Activated B cell treated with CpG ODN at 0.5 μM for 24 hours (primary cell): ENCODE measurements at regions of chr3 and their contacts with region 1.

Region 1: DNA sequence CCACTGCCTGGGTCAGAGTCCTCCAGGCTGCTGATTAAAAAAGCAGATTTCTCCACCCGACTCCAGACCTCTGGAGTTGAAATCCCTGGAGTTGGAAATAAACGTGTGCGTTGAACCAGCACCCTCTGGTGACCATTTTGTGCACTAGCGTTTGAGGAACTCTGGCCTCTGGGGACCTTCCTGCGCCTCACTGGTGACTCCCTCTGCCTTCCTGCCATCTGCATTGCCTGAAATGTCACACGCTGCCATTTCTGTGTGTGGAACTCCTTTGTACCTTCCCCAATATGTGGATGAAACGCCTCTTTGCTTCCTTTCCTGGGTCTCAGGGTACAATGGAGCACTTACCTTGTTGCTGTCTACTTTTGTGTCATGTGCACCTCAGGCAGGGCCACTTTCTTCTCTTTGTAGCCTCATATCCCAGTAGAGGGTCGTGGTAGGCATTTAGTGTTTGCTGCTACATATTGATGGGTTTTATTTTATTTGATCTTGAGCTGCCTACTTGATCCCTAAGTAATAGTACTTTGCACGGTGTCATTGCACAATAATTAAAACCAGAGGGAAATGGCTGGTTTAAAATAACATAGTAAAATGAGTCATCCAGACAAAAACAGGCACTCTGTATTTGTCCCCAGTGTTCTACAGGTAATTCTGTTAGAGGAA is 56.8 kb downstream of the GPR171 start:
- DNase-seq: peak; percentile 36
- ATAC-seq: peak; percentile 99
- H3K4me3 Mint-ChIP-seq: no peak overlapping the region
- H3K27ac Mint-ChIP-seq: no peak overlapping the region
- H3K4me1 Mint-ChIP-seq: peaks cover 4% of the 10 kb centered on the region
- H3K27me3 Mint-ChIP-seq: peaks cover 4% of the 10 kb centered on the region
- CTCF ChIP-seq: peak; percentile 87

Region 2: DNA sequence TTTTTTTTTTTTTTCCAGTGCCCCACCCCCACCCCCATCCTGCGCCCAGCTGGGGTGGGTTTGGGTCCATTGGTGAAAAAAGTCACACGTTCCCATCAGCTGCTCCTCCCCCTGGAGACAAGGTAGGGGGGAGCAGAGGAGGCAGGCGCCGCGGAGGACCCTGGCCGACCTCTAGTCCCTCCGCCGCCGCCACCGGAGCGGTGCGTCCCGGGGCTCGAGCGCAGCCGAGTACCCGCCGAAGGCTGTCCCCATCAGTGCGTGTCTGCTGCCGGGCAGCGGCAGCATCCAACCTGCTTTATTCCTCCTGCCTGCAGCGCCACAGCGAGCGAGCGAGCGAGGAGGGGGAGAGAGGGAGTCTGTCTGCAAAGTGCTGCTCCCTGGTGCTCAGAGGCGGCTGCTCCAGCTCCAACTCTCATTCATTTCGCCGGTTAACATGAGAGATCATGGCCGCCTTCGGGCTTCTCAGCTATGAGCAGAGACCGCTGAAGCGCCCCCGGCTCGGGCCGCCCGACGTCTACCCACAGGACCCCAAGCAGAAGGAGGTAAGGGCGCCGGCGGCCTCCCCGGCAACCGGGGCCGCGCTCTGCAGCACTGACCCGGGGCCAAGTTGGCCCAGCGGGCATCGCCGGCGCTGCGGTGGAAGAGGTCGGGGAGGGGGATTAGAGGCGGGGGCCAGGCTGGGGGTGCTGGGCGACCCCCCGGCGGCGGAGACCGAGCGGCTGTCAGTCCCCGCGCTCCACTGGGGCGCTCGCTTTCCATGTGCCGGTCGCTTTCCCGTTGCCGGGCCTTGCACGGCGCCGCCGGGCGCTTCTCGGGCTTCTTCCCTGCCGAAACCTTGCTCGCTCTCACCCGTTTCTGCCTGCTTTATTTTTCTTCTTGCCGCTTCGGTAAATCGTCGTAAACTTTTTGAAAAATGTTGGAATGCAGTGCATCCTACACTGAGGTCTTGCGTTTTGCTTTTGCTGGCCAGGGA is 59.4 kb before region 1 on chr3:
- CTCF ChIA-PET with region 1: interaction called, 3 read pairs
- POLR2A ChIA-PET with region 1: interaction called, 4 read pairs
- intact Hi-C with region 1: loop called (anchors 2 kb)
- DNase-seq: peak; percentile 42
- ATAC-seq: peak; percentile 72
- H3K4me3 Mint-ChIP-seq: peak overlapping the region; percentile 89
- H3K27ac Mint-ChIP-seq: peak overlapping the region; percentile 30
- H3K4me1 Mint-ChIP-seq: peaks cover 11% of the 10 kb centered on the region
- H3K27me3 Mint-ChIP-seq: peaks cover 27% of the 10 kb centered on the region
- CTCF ChIP-seq: no peak